ENCODE measurements at regions of chr9 and their contacts with region 1.

Region 1: GRCh38 chr9:4750023-4750673 is 9.1 kb upstream of the AK3 start:
- DNase-seq: no peak
- ATAC-seq: peak in 7 of 8 donors; percentile 41 to 74 (median 62)
- H3K4me3 ChIP-seq: no peak overlapping the region
- H3K27ac ChIP-seq: no peak overlapping the region
- H3K4me1 ChIP-seq: peaks cover 0 to 7% (median 2%) of the 10 kb centered on the region in 9 donors
- H3K27me3 ChIP-seq: no peaks in the 10 kb centered on the region
- CTCF ChIP-seq: peak in 8 of 9 donors; percentile 24 to 73 (median 64)

Region 2: DNA sequence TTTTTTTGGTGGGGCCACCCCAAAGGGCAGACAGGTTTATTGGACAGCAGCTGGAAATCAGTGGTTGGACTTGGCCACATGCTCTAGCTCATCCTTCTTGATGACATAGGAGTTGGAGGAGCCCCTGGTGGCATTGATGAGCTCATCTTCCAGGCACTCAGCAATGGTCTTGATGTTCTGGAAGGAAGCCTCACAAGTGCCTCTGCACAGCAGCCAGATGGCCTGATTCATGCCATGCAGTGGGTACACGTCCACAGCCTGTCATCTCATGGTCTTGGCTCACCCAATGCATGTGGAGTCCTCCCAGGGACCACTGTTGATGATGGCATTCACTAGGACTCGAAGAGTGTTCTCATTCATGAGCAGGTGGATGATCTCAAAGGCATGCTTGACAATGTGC is 31.3 kb after region 1 on chr9:
- intact Hi-C with region 1: no loop called
- DNase-seq: no peak
- ATAC-seq: no peak
- H3K4me3 ChIP-seq: no peak overlapping the region
- H3K27ac ChIP-seq: no peak overlapping the region
- H3K4me1 ChIP-seq: no peaks in the 10 kb centered on the region
- H3K27me3 ChIP-seq: peaks cover 0 to 18% (median 0%) of the 10 kb centered on the region in 7 donors
- CTCF ChIP-seq: no peak

Region 3: DNA sequence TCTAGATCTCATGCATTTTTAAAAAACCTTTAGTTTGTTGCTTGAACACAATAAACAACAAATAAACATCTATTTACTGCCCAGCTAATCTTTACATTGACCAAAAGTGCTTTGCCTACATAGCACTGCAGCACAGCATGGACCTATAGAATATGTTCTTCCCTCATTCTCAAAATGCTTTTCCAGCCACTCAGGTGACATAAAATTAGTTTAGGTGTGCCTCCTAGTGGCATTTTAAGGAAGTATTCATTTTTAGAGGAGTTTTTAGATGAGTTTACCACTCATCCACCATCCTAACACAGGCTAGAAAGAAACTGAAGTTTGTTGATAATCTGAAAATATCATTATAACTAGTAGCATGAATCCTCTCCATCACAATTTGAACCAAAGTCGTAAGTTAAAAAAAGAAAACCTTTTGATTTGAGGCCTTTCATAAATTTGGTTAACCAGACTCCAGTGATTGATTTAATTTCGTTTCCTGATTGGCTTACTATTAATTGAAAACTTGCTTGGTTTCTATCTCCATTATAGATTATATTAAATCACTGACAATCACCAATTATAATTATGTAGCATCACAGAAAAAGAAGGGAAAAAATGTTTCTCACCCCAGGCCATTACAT is 675.0 kb after region 1 on chr9:
- intact Hi-C with region 1: loop called in 2 of 10 experiments (anchors 10 kb)
- DNase-seq: no peak
- ATAC-seq: no peak
- H3K4me3 ChIP-seq: no peak overlapping the region
- H3K27ac ChIP-seq: no peak overlapping the region
- H3K4me1 ChIP-seq: no peaks in the 10 kb centered on the region
- H3K27me3 ChIP-seq: no peaks in the 10 kb centered on the region
- CTCF ChIP-seq: peak in 7 of 9 donors; percentile 30 to 57 (median 46)

Region 4: GRCh38 chr9:5593904-5594303 is 843.8 kb after region 1 on chr9:
- intact Hi-C with region 1: loop called in 2 of 10 experiments (anchors 5 kb)
- DNase-seq: no peak
- ATAC-seq: no peak
- H3K4me3 ChIP-seq: no peak overlapping the region
- H3K27ac ChIP-seq: no peak overlapping the region
- H3K4me1 ChIP-seq: peaks cover 0 to 20% (median 4%) of the 10 kb centered on the region in 9 donors
- H3K27me3 ChIP-seq: no peaks in the 10 kb centered on the region
- CTCF ChIP-seq: no peak